Tibial artery (tissue), 4 donors: ENCODE measurements at regions of chr1 and their contacts with region 1.

Region 1: GRCh38 chr1:26879793-26880192 is 10.3 kb downstream of the GPN2 start:
- DNase-seq: no peak
- H3K4me3 ChIP-seq: no peak overlapping the region
- H3K27ac ChIP-seq: no peak overlapping the region
- H3K4me1 ChIP-seq: peaks cover 0 to 5% (median 2%) of the 10 kb centered on the region in 4 donors
- H3K27me3 ChIP-seq: no peaks in the 10 kb centered on the region
- CTCF ChIP-seq: no peak

Region 2: GRCh38 chr1:26853156-26853555 is 26.6 kb before region 1 on chr1:
- intact Hi-C with region 1: loop called (anchors 2 kb)
- DNase-seq: peak; percentile 91 to 93
- H3K4me3 ChIP-seq: no peak overlapping the region
- H3K27ac ChIP-seq: no peak overlapping the region
- H3K4me1 ChIP-seq: peaks cover 0 to 12% (median 9%) of the 10 kb centered on the region in 4 donors
- H3K27me3 ChIP-seq: no peaks in the 10 kb centered on the region
- CTCF ChIP-seq: peak; percentile 81 to 91

Region 3: DNA sequence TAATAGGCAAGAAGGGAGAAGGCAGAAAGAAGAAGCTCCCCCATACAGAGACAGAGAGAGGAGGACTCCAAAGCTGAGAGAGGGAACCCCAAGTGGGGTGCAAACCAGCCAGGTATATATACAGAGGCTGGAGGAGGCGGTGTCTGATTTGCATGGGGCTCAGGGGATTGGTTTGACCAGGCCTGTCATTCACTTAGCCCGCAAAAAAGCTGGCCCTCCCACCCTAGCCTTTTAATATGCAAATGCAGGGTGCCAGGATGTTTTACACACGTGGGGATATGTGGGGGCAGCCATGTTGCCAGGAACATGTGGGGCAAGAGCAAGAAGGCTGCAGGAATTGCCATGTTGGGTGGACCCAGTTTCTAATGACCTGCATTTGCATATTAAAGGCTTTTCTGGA is 169.8 kb after region 1 on chr1:
- intact Hi-C with region 1: no loop called
- DNase-seq: no peak
- H3K4me3 ChIP-seq: no peak overlapping the region
- H3K27ac ChIP-seq: no peak overlapping the region
- H3K4me1 ChIP-seq: peaks cover 0 to 7% (median 5%) of the 10 kb centered on the region in 4 donors
- H3K27me3 ChIP-seq: peaks cover 0 to 7% of the 10 kb centered on the region in 2 donors
- CTCF ChIP-seq: no peak